ENCODE measurements at regions of chr1 and their contacts with region 1.

Region 1: GRCh38 chr1:40040511-40041465 is at the start of gene CAP1:
- DNase-seq: peak; percentile 99 to 100 (median 100)
- ATAC-seq: peak; percentile 97
- H3K4me3 ChIP-seq: peak within 1 kb of the TSS; percentile 99
- H3K4me3 Mint-ChIP-seq: peak within 1 kb of the TSS; percentile 90 to 99 (median 98)
- H3K27ac ChIP-seq: peak within 1 kb of the TSS; percentile 91
- H3K27ac Mint-ChIP-seq: peak within 1 kb of the TSS; percentile 85 to 99 (median 97)
- H3K4me1 ChIP-seq: peaks cover 49 to 51% of the 10 kb centered on the region in 2 donors
- H3K4me1 Mint-ChIP-seq: peaks cover 54 to 82% (median 72%) of the 10 kb centered on the region in 7 donors
- H3K27me3 ChIP-seq: no peaks in the 10 kb centered on the region
- H3K27me3 Mint-ChIP-seq: no peaks in the 10 kb centered on the region
- total RNA-seq, gene CAP1: 176 to 683 (median 282) TPM

Region 2: GRCh38 chr1:39738622-39739366 is 302.0 kb before region 1 on chr1 and contains the start of gene PPIE:
- CTCF ChIA-PET with region 1: no interaction called
- POLR2A ChIA-PET with region 1: no interaction called
- intact Hi-C with region 1: loop called in 1 of 2 experiments (anchors 10 kb)
- DNase-seq: peak; percentile 71 to 88 (median 85)
- ATAC-seq: peak; percentile 99
- H3K4me3 ChIP-seq: peak within 1 kb of the TSS; percentile 88
- H3K4me3 Mint-ChIP-seq: peak within 1 kb of the TSS; percentile 86 to 98 (median 96)
- H3K27ac ChIP-seq: peak within 1 kb of the TSS; percentile 74
- H3K27ac Mint-ChIP-seq: peak within 1 kb of the TSS; percentile 92 to 97 (median 96)
- H3K4me1 ChIP-seq: peaks cover 16 to 17% of the 10 kb centered on the region in 2 donors
- H3K4me1 Mint-ChIP-seq: peaks cover 21 to 44% (median 38%) of the 10 kb centered on the region in 7 donors
- H3K27me3 ChIP-seq: no peaks in the 10 kb centered on the region
- H3K27me3 Mint-ChIP-seq: peaks cover 2 to 16% (median 11%) of the 10 kb centered on the region in 5 donors
- total RNA-seq, gene PPIE: 52.3 to 79.1 (median 61.3) TPM

Region 3: DNA sequence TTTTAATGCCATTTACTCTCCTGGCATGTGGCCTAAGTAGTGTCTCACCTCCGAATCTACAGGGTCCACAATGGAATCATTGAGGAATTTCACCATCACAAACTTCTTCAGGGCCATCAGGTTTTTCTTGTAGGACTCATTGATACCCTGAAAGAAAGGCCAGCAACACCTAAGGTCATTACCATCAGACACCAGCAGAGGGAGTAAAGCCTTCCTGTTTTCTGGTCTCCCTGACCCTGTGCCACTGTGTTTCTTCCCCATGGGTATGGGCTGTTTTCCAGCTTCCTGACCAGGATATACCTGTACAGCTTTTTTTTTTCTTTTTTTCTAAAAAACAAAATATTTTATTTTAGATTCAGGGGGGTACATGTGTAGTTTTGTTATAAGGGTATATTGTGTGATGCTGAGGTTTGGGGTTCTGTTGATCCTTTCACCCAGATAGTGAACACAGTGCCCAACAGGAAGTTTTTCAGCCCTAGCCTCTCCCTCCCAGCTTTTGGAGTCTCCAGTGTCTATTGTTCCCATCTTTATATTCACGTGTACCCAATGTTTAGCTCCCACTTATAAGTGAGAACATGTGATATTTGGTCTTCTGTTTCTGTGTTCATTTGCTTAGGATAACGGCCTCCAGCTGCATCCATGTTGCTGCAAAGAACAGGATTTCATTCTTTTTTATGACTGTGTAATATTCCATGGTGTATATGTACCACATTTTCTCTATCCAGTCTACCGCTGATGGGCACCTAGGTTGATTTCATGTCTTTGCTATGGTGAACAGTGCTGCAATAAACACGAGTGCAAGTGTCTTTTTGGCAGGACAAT is 37.9 kb after region 1 on chr1:
- CTCF ChIA-PET with region 1: interaction called, 5 read pairs
- POLR2A ChIA-PET with region 1: interaction called, 306 read pairs
- intact Hi-C with region 1: loop called in 1 of 2 experiments (anchors 1 kb)
- DNase-seq: peak in 8 of 9 donors; percentile 13 to 59 (median 48)
- ATAC-seq: peak; percentile 88
- H3K4me3 ChIP-seq: no peak overlapping the region
- H3K4me3 Mint-ChIP-seq: no peak overlapping the region
- H3K27ac ChIP-seq: no peak overlapping the region
- H3K27ac Mint-ChIP-seq: peak overlapping the region in 6 of 9 donors; percentile 34 to 91 (median 66)
- H3K4me1 ChIP-seq: no peaks in the 10 kb centered on the region
- H3K4me1 Mint-ChIP-seq: peaks cover 0 to 24% (median 13%) of the 10 kb centered on the region in 7 donors
- H3K27me3 ChIP-seq: no peaks in the 10 kb centered on the region
- H3K27me3 Mint-ChIP-seq: no peaks in the 10 kb centered on the region

Region 4: DNA sequence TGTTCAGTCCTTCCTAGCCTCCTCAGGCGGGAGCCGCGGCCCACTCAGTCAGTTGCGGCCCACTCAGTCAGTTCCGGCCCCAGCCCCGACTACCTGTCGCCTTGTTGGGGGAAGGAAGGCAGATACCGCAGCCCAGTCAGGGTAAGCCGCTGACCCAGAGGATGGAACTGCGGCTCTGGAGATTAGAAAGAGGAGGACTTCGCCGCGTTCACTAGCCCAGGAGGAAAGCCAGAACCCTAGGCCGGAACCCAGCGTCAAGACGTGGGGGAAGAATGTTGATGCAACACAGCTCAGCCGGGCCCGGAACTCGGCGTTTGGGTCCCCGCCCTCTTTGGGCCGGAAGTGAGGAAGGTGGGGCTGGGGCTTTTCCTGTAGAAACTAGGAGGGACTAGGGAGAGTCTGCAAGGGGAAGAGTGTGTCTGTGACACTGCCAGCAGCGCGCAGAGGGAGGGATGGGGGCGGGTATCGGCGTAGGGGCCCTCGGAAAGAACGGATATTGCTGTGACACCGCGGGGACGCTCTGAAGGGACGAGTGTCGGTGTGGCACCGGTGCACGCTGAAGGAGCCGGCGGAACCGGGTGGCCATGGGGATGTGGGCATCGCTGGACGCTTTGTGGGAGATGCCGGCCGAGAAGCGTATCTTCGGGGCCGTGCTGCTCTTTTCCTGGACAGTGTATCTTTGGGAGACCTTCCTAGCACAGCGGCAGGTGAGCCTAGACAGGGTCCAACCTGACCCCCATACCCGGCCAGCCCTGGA is 217.1 kb after region 1 on chr1 and contains the start of gene ZMPSTE24:
- CTCF ChIA-PET with region 1: no interaction called
- POLR2A ChIA-PET with region 1: interaction called, 7 read pairs
- intact Hi-C with region 1: loop called (anchors 1 kb)
- DNase-seq: peak; percentile 84 to 98 (median 95)
- ATAC-seq: peak; percentile 98
- H3K4me3 ChIP-seq: peak within 1 kb of the TSS; percentile 98
- H3K4me3 Mint-ChIP-seq: peak within 1 kb of the TSS; percentile 91 to 100 (median 98)
- H3K27ac ChIP-seq: peak within 1 kb of the TSS; percentile 98
- H3K27ac Mint-ChIP-seq: peak within 1 kb of the TSS; percentile 97 to 100 (median 100)
- H3K4me1 ChIP-seq: peaks cover 14% of the 10 kb centered on the region in 2 donors
- H3K4me1 Mint-ChIP-seq: peaks cover 27 to 71% (median 60%) of the 10 kb centered on the region in 7 donors
- H3K27me3 ChIP-seq: no peaks in the 10 kb centered on the region
- H3K27me3 Mint-ChIP-seq: peaks cover 0 to 4% (median 0%) of the 10 kb centered on the region in 5 donors
- total RNA-seq, gene ZMPSTE24: 9.5 to 31.0 (median 14.1) TPM

Region 5: DNA sequence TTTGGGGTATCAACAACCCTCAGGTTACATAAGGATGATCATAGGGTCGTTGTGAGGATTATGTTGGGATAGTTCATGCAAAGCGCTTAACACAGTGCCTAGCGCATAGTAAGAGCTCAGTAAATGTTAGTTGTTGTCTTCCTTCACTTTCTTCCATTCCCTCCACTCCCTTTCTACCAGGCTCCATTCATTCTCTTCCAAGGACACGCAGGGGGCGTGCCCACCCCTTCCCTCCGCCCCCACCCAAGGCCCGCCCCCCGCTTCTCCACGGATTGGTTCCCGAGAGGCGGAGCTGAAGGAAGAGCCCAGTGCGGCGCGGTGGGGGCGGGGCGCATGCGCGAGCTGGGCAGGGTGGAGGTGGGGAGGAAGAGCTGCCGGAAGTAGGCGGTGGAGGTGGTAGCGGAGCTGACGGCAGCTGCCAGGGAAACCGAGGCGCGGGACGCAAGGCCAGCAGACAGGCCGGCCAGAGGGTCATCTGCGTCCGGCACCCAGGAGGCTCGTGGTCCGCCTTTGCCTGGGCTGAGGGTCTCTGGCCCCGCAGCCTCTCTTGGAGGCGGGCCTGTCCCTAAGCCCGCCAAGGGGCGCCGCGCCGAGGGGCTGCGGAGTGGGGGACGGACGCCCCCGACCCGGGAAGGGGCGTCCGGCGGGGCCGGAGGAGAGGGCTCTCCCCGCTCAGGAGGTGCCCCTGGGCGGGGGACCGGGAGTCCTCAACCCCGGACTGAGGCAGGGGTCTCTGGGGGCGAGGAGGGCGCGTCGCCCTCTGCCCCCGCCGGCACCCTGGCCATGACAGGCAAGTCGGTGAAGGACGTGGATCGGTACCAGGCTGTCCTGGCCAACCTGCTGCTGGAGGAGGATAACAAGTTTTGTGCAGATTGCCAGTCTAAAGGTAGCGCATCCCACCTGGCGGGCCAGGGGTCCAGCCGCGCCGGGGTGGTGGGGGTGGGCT is 332.8 kb after region 1 on chr1 and contains the start of gene SMAP2:
- CTCF ChIA-PET with region 1: no interaction called
- POLR2A ChIA-PET with region 1: interaction called, 3 read pairs
- intact Hi-C with region 1: loop called in 1 of 2 experiments (anchors 5 kb)
- DNase-seq: peak; percentile 94 to 98 (median 96)
- ATAC-seq: peak; percentile 91
- H3K4me3 ChIP-seq: peak within 1 kb of the TSS; percentile 99
- H3K4me3 Mint-ChIP-seq: peak within 1 kb of the TSS; percentile 94 to 100 (median 99)
- H3K27ac ChIP-seq: peak within 1 kb of the TSS; percentile 99
- H3K27ac Mint-ChIP-seq: peak within 1 kb of the TSS; percentile 97 to 100 (median 99)
- H3K4me1 ChIP-seq: peaks cover 33 to 36% of the 10 kb centered on the region in 2 donors
- H3K4me1 Mint-ChIP-seq: peaks cover 43 to 66% (median 54%) of the 10 kb centered on the region in 7 donors
- H3K27me3 ChIP-seq: no peaks in the 10 kb centered on the region
- H3K27me3 Mint-ChIP-seq: peaks cover 0 to 4% (median 0%) of the 10 kb centered on the region in 5 donors
- total RNA-seq, gene SMAP2: 144 to 210 (median 187) TPM

Region 6: GRCh38 chr1:40979233-40980067 is 938.7 kb after region 1 on chr1 and contains the start of gene CTPS1:
- CTCF ChIA-PET with region 1: no interaction called
- POLR2A ChIA-PET with region 1: no interaction called
- intact Hi-C with region 1: loop called in 1 of 2 experiments (anchors 5 kb)
- DNase-seq: peak; percentile 88 to 97 (median 95)
- ATAC-seq: peak; percentile 92
- H3K4me3 ChIP-seq: peak within 1 kb of the TSS; percentile 62
- H3K4me3 Mint-ChIP-seq: peak within 1 kb of the TSS; percentile 78 to 98 (median 92)
- H3K27ac ChIP-seq: peak within 1 kb of the TSS; percentile 97
- H3K27ac Mint-ChIP-seq: peak within 1 kb of the TSS; percentile 84 to 97 (median 94)
- H3K4me1 ChIP-seq: peaks cover 10 to 11% of the 10 kb centered on the region in 2 donors
- H3K4me1 Mint-ChIP-seq: peaks cover 17 to 42% (median 29%) of the 10 kb centered on the region in 7 donors
- H3K27me3 ChIP-seq: no peaks in the 10 kb centered on the region
- H3K27me3 Mint-ChIP-seq: no peaks in the 10 kb centered on the region
- total RNA-seq, gene CTPS1: 16.4 to 57.6 (median 40.6) TPM